AG04449 (cell line): ENCODE measurements at regions of chr9 and their contacts with region 1.

Region 1: DNA sequence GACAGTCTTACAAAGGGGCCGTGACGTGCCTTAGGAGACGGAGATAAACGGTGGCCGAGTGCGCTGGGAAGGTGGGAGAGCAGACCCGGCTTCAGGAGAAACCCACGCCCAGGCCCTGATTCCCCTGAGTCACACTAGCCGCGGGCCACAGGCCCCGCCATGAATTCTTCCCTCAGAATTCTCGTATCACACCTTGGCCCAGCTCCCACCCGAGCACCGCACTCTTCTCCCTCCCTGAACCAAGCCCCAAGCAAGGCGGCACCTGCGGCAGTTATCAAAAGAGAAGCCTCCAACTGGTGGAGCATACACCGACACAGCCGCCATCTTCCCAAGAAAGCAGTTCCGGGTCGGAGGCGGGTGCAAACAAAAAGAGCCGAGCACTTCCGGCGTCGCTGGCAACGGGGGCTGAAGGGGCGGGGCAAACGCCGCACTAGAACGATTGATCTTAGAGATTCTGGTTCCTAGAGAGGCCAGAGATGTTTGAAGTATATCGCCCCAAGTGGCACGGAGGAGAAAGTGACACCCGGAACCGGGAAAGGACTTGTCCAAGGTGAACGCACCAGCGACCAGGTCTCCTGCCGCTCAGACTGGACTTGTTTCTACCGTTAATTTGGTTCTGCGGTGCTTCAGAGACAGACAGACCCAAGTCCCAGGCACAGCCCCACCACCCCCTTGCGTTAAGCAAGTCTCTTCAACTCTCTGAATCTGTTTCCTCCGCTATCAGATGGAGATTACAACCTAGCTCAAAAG is at the start of gene PSMB7:
- DNase-seq: peak; percentile 71
- H3K4me3 ChIP-seq: peak within 1 kb of the TSS; percentile 98
- CTCF ChIP-seq: peak; percentile 78

Region 2: DNA sequence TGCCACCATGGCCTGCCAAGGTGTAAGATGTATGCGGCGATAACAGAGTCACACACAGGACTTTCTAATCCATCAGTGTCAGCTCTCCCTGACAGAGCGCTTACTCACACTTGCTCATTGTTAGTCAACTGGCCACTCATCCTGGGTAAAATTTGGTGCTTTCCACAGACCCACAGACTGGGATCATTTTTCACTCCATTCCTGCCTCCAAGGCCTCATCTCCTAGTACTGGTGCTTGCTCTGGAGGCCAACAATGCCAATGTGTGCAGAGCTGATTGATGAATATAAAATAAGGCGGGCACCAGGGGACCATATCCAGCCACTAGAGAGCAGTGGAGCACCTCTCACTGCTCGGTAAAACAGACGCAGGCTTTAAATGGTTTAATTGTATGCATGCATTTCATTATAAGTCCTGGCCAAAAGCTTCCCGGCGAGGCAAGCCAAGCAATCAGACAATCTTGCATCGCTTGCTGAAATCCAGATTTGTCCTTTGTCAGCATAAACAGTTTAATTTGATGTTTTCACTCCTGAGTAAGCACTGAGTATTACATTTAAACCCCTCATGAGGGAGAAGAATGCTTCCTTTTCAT is 22.3 kb before region 1 on chr9:
- CTCF ChIA-PET with region 1: interaction called, 177 read pairs
- POLR2A ChIA-PET with region 1: interaction called, 4 read pairs
- DNase-seq: peak; percentile 63
- H3K4me3 ChIP-seq: no peak overlapping the region
- CTCF ChIP-seq: peak; percentile 55

Region 3: DNA sequence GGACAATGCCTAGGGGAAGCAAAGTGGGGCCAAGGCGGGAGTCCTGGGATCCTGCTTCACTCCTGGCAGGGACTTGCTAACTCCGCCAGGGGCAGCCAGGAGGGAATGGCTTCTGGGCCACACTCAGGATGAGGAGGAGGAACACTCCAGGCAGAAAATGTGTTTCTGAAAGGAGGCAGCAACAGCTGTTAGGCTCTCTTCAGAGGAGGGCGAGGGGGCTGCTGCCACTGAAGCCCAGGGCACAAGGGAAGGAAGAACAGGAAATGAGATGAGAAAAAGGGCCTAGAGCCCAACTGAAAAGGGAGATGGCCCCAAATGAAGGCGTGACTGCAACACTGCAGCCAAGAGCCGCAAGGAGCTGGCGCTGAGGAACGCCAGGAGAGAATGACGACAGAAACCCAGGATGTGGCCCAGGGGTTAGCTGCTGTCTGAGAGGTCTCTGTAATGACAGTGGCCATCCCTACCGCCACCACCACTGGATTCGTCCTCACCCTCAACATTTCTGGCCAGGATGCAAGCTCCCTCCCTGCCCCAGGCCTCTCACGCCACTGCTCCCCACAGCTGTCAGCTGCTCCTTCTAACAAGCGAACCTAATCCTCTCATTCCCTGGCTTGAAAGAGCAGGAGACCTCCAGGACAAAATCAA is 15.8 kb before region 1 on chr9:
- CTCF ChIA-PET with region 1: interaction called, 177 read pairs
- POLR2A ChIA-PET with region 1: interaction called, 4 read pairs
- DNase-seq: no peak
- H3K4me3 ChIP-seq: no peak overlapping the region
- CTCF ChIP-seq: no peak

Region 4: GRCh38 chr9:124441291-124441690 is 26.0 kb after region 1 on chr9:
- CTCF ChIA-PET with region 1: interaction called, 65 read pairs
- POLR2A ChIA-PET with region 1: no interaction called
- DNase-seq: no peak
- H3K4me3 ChIP-seq: no peak overlapping the region
- CTCF ChIP-seq: no peak

Region 5: GRCh38 chr9:124532897-124533296 is 117.6 kb after region 1 on chr9:
- CTCF ChIA-PET with region 1: interaction called, 263 read pairs
- POLR2A ChIA-PET with region 1: no interaction called
- DNase-seq: no peak
- H3K4me3 ChIP-seq: no peak overlapping the region
- CTCF ChIP-seq: no peak